Left ventricle myocardium superior (tissue), 1 donor: ENCODE measurements at regions of chr1 and their contacts with region 1.

Region 1: DNA sequence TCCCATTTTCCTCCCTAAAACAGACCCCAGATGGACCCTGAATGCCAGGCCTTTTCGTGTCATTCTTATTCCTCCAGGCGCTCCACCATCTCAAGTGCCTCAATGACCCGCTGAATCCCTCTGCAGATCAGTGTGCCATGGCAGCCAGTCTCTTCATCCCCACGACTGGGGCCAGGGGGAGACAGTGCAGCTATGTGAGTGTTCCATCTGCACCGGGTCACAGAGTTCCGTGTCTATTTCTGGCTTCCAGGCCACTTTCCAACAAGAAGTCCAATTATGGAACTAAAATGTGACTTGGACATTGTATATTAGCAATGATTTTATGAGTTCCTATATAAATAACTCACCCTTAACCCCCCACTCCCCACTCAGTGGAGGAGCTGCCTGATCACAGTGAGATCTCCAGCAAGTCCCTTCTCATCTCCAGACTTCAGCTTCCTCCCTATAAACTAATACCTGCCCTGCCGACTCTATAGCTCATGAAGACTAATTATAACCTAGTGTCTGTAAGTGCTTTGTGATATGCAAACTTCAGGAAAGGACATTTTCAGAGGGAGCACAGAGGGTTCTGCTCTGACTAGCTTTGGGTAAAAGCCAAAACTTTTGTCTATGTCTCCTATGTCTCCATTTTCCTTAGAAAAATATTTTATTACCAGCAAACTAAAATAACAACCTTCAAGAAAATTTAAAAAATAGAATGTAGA is 56.3 kb upstream of the NFASC start:
- DNase-seq: peak; percentile 65
- ATAC-seq: peak; percentile 96

Region 2: GRCh38 chr1:204885790-204886189 is 71.5 kb after region 1 on chr1:
- intact Hi-C with region 1: loop called (anchors 2 kb)
- DNase-seq: no peak
- ATAC-seq: peak; percentile 5